ENCODE measurements at regions of chr20 and their contacts with region 1.

Region 1: DNA sequence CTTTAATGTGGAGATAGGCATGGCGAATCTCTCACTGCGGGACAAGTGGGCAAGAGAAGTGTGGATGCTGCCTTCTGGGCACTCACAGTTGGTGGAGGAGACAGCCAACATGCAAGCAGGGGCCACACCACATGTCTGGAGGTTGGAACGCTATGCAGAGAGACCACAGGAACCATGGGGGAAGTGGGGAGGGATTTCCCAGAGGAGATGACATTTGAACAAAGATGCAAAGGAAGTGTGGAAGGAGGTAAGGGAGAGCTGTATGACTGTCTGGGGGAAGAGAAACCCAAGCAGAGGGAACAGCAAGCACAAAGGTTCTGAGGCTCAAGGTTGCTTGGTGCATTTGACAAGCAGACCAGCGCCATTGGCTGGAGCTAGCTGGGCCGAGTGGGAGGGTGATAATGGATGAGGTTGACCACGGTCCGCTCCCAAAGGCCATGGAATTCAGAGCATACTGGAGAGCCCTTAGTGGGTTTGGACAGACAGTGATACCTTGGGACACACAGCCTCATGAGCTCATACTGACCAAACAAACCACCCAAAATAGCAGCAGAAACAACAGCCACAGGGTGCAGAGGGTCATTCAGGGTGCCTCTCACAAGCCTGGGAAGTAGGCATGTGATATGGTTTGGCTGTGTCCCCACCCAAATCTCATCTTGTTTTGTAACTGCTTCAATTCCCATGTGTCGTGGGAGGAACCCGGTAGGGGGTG is 7.6 kb upstream of the FAM110A start:
- DNase-seq: no peak
- ATAC-seq: no peak
- H3K4me3 ChIP-seq: no peak overlapping the region
- H3K4me3 Mint-ChIP-seq: no peak overlapping the region
- H3K27ac ChIP-seq: no peak overlapping the region
- H3K27ac Mint-ChIP-seq: no peak overlapping the region
- H3K4me1 ChIP-seq: no peaks in the 10 kb centered on the region
- H3K4me1 Mint-ChIP-seq: no peaks in the 10 kb centered on the region
- H3K27me3 ChIP-seq: no peaks in the 10 kb centered on the region
- H3K27me3 Mint-ChIP-seq: no peaks in the 10 kb centered on the region
- CTCF ChIP-seq: no peak

Region 2: DNA sequence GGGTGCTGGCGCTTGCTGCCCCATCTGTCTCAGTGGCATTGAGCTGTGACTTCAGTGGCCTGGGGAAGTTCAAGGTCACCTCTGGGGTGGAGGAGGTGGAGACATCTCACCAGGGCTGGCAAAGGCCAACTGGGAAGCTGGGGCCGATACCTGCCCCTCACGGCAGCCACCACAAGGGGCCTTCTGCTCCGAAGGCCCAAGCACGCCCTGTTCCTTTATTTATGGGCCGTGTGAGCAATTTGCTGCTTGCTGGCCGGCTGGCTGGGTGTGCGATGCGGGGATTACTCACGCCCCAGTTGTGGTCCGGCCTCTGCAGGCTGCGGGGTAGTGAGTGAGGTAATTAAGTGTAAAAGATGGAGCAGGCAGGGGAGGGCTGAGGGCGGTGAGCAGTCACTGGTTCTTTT is 137.1 kb before region 1 on chr20:
- CTCF ChIA-PET with region 1: no interaction called
- POLR2A ChIA-PET with region 1: no interaction called
- intact Hi-C with region 1: no loop called
- DNase-seq: no peak
- ATAC-seq: no peak
- H3K4me3 ChIP-seq: no peak overlapping the region
- H3K4me3 Mint-ChIP-seq: no peak overlapping the region
- H3K27ac ChIP-seq: no peak overlapping the region
- H3K27ac Mint-ChIP-seq: no peak overlapping the region
- H3K4me1 ChIP-seq: no peaks in the 10 kb centered on the region
- H3K4me1 Mint-ChIP-seq: no peaks in the 10 kb centered on the region
- H3K27me3 ChIP-seq: no peaks in the 10 kb centered on the region
- H3K27me3 Mint-ChIP-seq: peaks cover 22% of the 10 kb centered on the region
- CTCF ChIP-seq: no peak

Region 3: GRCh38 chr20:856361-857040 is 30.6 kb after region 1 on chr20:
- CTCF ChIA-PET with region 1: no interaction called
- POLR2A ChIA-PET with region 1: no interaction called
- intact Hi-C with region 1: loop called in 1 of 2 experiments (anchors 5 kb)
- DNase-seq: peak in 7 of 9 experiments; percentile 30 to 77 (median 64)
- ATAC-seq: peak; percentile 91
- H3K4me3 ChIP-seq: peak overlapping the region in 1 of 2 experiments; percentile 28
- H3K4me3 Mint-ChIP-seq: peak overlapping the region; percentile 66
- H3K27ac ChIP-seq: peak overlapping the region in 1 of 2 experiments; percentile 17
- H3K27ac Mint-ChIP-seq: peak overlapping the region; percentile 83
- H3K4me1 ChIP-seq: peaks cover 37% of the 10 kb centered on the region
- H3K4me1 Mint-ChIP-seq: peaks cover 62% of the 10 kb centered on the region
- H3K27me3 ChIP-seq: no peaks in the 10 kb centered on the region
- H3K27me3 Mint-ChIP-seq: no peaks in the 10 kb centered on the region
- CTCF ChIP-seq: no peak